MCF 10A (cell line): ENCODE measurements at regions of chr1 and their contacts with region 1.

Region 1: DNA sequence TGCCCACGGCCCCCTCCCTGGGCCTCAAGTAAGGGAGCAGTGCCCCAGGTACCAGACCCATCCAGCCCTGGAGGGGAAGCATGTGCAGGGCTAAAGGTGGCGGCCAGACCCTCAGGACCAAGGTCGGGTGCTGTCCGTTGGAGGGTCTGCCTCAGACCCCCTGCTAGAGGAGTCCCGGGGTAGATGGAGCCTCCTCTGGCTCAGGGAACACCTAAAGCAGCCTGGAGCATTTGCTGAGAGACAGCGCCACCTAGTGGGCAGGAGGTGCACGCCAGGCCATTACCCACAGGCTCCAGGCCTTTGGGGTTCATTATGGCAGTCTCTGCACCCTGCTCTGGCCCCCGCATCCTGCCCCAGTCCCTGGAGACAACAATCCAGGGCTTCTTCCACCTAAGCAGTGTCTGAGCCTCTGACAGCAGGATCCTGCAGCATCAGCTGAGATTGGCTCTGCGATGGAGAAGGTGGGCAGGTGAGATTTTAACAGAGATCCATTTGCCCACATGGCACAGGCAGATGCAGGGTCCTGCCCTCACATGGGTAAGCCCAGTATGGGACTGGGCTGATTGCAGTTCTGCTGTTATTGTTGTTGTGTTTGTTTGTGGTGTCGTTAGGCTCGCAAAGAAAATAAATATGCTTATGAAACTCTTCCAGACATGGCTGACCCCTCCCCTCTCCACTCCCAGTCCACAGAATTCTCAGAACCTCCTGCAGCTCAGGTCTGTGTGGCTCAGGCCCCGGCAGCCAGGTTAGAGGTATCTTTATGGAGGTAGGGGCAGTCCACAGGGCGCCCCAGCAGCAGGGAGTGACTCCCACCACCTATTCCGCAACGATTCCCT is 42.4 kb downstream of the CTNNBIP1 start:
- DNase-seq: peak; percentile 79
- H3K4me3 Mint-ChIP-seq: no peak overlapping the region
- H3K27ac Mint-ChIP-seq: no peak overlapping the region
- H3K4me1 Mint-ChIP-seq: peaks cover 7% of the 10 kb centered on the region
- H3K27me3 Mint-ChIP-seq: no peaks in the 10 kb centered on the region
- CTCF ChIP-seq: peak; percentile 93

Region 2: DNA sequence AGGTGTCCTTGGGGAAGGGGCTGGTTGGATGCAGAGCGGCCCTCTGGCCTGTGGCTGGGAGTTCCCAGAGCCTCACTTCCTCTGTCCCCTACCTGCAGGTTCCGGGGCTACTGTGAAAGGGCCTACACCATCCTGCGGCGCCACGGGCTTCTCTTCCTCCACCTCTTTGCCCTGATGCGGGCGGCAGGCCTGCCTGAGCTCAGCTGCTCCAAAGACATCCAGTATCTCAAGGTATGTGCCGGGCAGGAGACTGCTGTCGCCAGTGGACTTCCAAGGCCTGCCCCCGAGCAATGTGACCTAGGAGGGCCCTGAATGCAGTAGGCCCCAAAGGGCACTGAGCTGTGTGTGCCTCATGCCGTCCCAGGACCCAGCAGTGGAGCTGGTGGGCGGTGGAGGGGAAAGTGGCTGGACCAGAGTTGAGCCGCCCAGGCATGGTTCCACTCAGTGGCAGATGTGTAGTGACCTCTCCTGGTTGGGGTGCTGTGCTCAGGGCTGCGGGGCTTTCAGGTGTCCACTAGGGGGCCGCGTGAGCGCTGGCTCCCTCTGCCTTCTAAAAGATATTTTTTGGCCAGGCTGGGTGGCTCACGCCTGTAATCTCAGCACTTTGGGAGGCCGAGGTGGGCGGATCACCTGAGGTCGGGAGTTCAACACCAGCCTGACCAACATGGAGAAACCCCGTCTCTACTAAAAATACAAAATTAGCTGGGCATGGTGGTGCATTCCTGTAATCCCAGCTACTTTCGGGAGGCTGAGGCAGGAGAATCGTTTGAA is 142.7 kb before region 1 on chr1:
- CTCF ChIA-PET with region 1: interaction called, 9 read pairs
- POLR2A ChIA-PET with region 1: no interaction called
- intact Hi-C with region 1: loop called (anchors 1 kb)
- DNase-seq: peak; percentile 73
- H3K4me3 Mint-ChIP-seq: no peak overlapping the region
- H3K27ac Mint-ChIP-seq: no peak overlapping the region
- H3K4me1 Mint-ChIP-seq: no peaks in the 10 kb centered on the region
- H3K27me3 Mint-ChIP-seq: no peaks in the 10 kb centered on the region
- CTCF ChIP-seq: peak; percentile 86

Region 3: DNA sequence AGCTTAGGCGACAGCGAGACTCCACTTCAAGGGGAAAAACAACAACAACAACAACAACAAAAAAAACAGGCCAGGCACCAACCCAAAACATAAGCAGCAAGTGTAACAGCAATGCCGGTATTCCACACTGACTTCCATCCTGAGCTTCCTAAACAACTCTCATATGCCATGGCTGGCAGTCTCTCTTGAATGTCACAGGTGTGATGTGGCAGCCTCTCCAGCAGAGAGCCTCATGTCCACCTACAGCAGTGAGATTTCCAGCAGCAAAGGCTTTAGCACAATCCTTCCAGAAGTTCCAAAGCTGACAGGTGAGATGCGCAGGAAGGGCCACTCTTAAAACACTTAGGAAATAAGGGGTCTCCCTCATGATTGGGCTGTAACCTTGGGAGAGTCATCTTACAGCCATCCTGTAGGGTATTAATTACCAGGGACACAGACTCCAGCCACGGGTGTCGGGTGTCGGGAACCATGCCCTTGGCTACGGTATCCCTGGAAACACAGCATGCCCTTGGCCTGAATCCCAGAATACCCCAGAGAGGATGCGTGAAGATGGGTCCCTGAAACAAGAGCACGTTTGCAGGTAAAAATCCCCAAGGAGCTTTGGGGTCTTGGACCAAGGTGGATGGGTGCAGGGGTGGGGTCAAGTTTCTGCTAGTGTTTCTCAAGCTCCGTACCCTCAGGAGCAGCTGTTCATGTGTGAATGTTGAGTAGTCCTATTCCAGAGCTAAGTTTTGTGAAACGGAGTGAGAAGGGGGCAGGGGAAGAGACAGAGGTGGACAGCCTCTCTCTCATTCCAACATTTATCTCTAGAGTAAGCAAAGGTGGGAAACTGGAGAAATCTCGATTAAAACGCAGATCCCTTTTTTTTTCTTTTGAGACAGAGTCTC is 75.2 kb before region 1 on chr1:
- CTCF ChIA-PET with region 1: interaction called, 190 read pairs
- POLR2A ChIA-PET with region 1: interaction called, 6 read pairs
- intact Hi-C with region 1: no loop called
- DNase-seq: peak; percentile 42
- H3K4me3 Mint-ChIP-seq: no peak overlapping the region
- H3K27ac Mint-ChIP-seq: no peak overlapping the region
- H3K4me1 Mint-ChIP-seq: peaks cover 12% of the 10 kb centered on the region
- H3K27me3 Mint-ChIP-seq: no peaks in the 10 kb centered on the region
- CTCF ChIP-seq: no peak